GM23248 (cell line): ENCODE measurements at regions of chr5 and their contacts with region 1.

Region 1: GRCh38 chr5:55691265-55692105 is 20.6 kb downstream of the SLC38A9 start:
- DNase-seq: peak; percentile 69
- H3K4me3 ChIP-seq: no peak overlapping the region
- H3K27ac ChIP-seq: no peak overlapping the region
- H3K4me1 ChIP-seq: peaks cover 4% of the 10 kb centered on the region; the same call in 1 of the 2 replicates
- H3K27me3 ChIP-seq: no peaks in the 10 kb centered on the region

Region 2: DNA sequence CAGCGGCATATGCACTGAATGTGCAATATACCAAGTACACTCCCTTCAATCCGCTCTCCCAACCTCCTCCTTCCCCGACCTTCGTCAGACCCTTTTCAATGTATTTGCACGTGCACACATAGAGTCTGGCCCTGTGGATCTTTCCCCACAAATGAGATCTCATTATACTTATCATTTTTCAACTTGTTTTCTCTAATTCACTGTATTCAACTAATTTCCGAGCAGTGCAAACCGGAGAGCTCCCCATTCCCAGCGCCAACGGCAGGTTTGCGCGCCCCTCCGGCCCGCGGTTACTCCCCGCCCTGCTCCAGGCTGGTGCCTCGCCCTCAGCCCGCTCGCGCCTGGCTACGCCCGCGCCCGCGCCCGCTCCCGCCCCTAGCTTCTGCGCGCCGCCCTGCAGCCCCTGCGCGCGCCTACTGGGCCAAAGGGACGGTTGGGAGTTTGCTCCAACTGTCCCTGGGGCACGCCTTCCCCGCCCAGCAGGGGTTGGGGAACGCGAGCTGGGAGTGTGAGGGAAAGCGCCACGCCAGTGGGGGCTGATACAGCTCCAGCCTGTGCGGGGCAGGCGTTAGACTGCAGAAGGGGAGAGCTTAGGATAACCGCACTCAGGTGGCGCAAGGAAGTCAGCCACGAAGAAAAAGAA is 515.2 kb before region 1 on chr5:
- in situ Hi-C with region 1: loop called (anchors 25 kb)
- DNase-seq: peak; percentile 67
- H3K4me3 ChIP-seq: peak overlapping the region; percentile 60
- H3K27ac ChIP-seq: no peak overlapping the region
- H3K4me1 ChIP-seq: peaks cover 16% of the 10 kb centered on the region
- H3K27me3 ChIP-seq: peaks cover 74% of the 10 kb centered on the region

Region 3: GRCh38 chr5:55407059-55407684 is 284.3 kb before region 1 on chr5:
- in situ Hi-C with region 1: loop called (anchors 25 kb)
- DNase-seq: peak; percentile 76
- H3K4me3 ChIP-seq: no peak overlapping the region
- H3K27ac ChIP-seq: no peak overlapping the region
- H3K4me1 ChIP-seq: peaks cover 7% of the 10 kb centered on the region; the same call in 1 of the 2 replicates
- H3K27me3 ChIP-seq: no peaks in the 10 kb centered on the region